CD8-positive, alpha-beta T cell (primary cell): ENCODE measurements at regions of chr18 and their contacts with region 1.

Region 1: DNA sequence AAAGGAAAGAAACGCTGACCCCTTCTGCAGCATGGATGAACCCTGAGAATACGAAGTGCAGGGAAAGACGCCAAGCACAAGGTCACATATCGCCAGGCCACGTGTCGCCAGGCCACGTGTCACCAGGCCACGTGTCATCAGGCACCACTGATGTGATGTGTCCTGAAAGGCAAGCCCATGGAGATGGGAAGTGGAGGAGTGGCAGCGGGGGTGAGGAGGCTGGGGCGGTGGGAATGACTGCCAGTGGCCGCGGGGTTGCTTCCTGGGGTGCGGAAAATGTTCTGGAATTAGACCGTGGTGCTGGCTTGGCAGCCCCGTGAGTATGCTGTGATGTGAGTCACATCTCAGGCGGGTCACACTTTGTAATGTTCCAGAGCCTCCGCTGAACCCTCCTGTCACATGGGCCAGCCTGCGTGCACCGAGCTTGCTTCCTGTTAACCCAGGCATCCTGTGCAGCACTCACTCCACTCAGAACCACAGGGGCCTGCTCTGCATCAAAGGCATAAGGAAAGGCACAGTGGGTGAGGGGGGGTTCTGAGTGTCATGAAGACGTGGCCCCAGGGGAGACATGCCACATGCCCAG is 39.0 kb downstream of the SLC66A2 start:
- DNase-seq: peak in 8 of 9 experiments; percentile 39 to 82 (median 60)
- ATAC-seq: peak; percentile 74
- H3K4me3 ChIP-seq: no peak overlapping the region
- H3K4me3 Mint-ChIP-seq: peak overlapping the region; percentile 16
- H3K27ac ChIP-seq: peak overlapping the region; percentile 8 to 51
- H3K27ac Mint-ChIP-seq: peak overlapping the region; percentile 96
- H3K4me1 ChIP-seq: peaks cover 43% of the 10 kb centered on the region
- H3K4me1 Mint-ChIP-seq: peaks cover 33% of the 10 kb centered on the region
- H3K27me3 ChIP-seq: no peaks in the 10 kb centered on the region
- H3K27me3 Mint-ChIP-seq: no peaks in the 10 kb centered on the region
- CTCF ChIP-seq: no peak

Region 2: DNA sequence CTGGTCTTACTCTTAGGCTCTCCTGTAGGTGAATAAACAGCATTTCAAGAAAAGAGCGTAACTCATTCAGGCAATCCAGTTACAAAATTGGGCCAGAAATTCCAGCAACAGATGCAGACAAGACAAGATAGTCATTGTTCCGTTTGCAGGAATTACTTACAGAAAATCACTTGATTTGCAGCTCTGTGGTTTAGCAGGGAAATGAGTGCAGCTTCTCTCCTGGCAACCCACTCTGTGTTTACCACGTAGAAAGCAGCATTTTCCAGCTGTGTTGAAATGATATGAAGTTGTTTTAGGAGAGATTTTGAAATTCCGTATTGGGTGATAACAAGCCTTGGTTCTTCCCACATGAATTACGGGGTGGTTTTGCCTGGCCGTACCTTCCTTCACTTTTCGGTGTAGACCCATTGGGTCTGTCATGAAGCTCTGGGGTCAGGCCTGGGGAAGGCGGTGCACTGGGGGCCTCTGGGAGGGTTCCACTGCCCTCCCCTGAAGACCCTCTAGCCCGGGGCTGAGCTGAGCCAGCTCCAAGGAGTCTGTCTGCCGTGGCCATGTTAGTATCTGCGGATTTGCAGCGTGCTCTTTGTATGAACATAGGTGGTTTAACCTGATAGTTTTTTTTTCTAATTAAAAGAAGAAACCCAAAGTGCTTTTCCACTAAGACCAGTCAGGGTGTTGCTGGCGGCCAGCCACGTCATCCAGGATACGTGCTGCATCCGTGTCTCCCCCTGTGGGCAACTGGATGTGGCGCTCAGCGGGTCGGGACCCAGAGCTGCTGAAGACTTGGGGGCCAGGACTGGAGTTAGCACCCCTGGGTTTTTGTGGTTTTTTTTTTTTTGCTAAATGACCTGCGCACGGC is 173.7 kb before region 1 on chr18:
- CTCF ChIA-PET with region 1: no interaction called
- POLR2A ChIA-PET with region 1: no interaction called
- intact Hi-C with region 1: loop called in 1 of 2 experiments (anchors 10 kb)
- DNase-seq: peak in 1 of 9 experiments; percentile 6
- ATAC-seq: no peak
- H3K4me3 ChIP-seq: no peak overlapping the region
- H3K4me3 Mint-ChIP-seq: no peak overlapping the region
- H3K27ac ChIP-seq: no peak overlapping the region
- H3K27ac Mint-ChIP-seq: no peak overlapping the region
- H3K4me1 ChIP-seq: no peaks in the 10 kb centered on the region
- H3K4me1 Mint-ChIP-seq: no peaks in the 10 kb centered on the region
- H3K27me3 ChIP-seq: no peaks in the 10 kb centered on the region
- H3K27me3 Mint-ChIP-seq: no peaks in the 10 kb centered on the region
- CTCF ChIP-seq: no peak